ENCODE measurements at regions of chr20 and their contacts with region 1.

Region 1: GRCh38 chr20:3753098-3753980 is 14.2 kb downstream of the ADISSP start:
- DNase-seq: peak; percentile 16
- H3K4me3 ChIP-seq: no peak overlapping the region
- CTCF ChIP-seq: peak; percentile 83

Region 2: DNA sequence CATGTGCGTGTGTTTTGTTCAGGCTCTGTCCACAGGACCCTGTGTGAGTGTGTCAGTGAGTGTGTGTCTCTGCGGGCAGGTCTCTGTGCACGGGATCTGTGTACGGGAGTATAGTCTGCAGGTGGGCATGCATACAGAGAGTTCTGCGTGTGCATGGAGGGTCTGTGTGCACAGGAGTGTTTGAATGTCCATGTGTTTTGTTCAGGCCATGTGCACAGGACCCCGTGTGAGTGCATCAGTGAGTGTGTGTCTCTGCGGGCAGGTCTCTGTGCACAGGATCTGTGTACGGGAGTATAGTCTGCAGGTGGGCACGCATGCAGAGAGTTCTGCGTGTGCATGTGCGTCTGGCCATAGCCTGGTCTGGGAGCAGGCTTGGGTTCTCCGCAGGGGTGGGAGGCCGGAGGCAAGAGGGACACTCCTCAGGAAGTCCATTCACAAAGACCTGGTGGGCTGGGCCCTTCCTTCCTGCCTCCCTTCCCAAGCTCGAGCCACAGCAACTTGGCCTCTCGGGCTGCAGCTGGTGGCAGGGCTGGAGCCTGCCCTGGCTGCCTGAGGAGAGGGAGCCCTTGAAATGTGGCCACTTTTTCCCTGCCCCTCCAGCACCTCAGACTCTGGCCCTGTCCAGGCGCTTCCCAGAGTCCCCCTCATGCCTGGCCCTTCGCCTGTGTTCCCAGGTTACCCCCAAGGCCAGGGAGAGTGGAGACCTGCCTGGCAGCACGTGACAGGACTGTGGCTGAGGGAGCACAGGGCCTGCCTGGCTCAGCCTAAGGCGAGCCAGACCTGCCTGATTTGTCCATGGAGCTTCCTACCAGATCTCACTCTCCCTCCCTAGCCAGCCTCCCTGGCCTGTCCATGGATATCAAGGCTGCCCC is 14.0 kb before region 1 on chr20:
- CTCF ChIA-PET with region 1: interaction called, 119 read pairs
- POLR2A ChIA-PET with region 1: no interaction called
- DNase-seq: no peak
- H3K4me3 ChIP-seq: no peak overlapping the region
- CTCF ChIP-seq: no peak

Region 3: GRCh38 chr20:3781153-3781910 is 28.0 kb after region 1 on chr20 and contains the start of gene SPEF1:
- CTCF ChIA-PET with region 1: interaction called, 28 read pairs
- POLR2A ChIA-PET with region 1: no interaction called
- DNase-seq: peak; percentile 59
- H3K4me3 ChIP-seq: peak within 1 kb of the TSS; percentile 60
- CTCF ChIP-seq: peak; percentile 68

Measured in AG04449 (cell line).